Body of pancreas (tissue), 4 donors: ENCODE measurements at regions of chr10 and their contacts with region 1.

Region 1: GRCh38 chr10:96826438-96826837 is 5.7 kb upstream of the LCOR start:
- DNase-seq: no peak
- ATAC-seq: no peak
- H3K4me3 ChIP-seq: no peak overlapping the region
- H3K27ac ChIP-seq: no peak overlapping the region
- H3K4me1 ChIP-seq: peaks cover 9% of the 10 kb centered on the region
- H3K27me3 ChIP-seq: no peaks in the 10 kb centered on the region
- CTCF ChIP-seq: no peak
- POLR2A ChIP-seq: no peak

Region 2: DNA sequence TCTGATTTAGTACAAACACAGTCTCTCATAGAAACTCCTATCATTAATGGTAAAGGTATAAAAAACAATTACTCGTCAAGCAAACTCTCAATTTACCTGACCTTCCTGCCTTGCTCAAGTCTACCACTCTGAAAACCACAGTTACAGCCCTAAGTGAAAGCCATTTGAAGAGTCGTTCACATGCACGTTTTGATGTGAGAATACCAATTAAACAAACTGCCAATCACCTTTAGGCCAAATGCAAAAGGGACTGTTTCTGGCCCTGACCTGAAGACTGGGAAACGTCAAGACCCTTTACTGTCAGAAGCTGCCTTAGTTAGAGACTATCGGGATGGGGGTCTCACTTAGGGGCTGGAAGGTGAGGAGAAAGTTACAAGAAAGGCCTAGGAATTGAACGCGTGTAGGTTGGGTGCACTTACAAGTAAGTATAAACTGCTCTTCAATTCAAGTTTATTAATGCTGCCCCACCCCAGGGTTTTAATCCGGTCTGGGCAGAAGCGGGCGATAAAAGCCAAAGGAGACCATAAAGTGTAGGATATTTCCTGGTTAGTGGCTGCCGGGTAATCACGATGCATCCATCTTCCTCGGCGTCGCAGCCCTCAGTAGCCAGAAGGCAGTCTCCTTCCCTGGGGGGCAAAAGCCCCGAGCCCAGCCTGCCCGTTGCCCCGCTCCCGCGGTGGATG is 240.6 kb before region 1 on chr10:
- intact Hi-C with region 1: no loop called
- DNase-seq: peak in 1 of 4 donors; percentile 35
- ATAC-seq: peak; percentile 12
- H3K4me3 ChIP-seq: peak overlapping the region; percentile 77 to 86
- H3K27ac ChIP-seq: peak overlapping the region; percentile 97 to 99 (median 98)
- H3K4me1 ChIP-seq: peaks cover 55% of the 10 kb centered on the region
- H3K27me3 ChIP-seq: no peaks in the 10 kb centered on the region
- CTCF ChIP-seq: no peak
- POLR2A ChIP-seq: no peak

Region 3: DNA sequence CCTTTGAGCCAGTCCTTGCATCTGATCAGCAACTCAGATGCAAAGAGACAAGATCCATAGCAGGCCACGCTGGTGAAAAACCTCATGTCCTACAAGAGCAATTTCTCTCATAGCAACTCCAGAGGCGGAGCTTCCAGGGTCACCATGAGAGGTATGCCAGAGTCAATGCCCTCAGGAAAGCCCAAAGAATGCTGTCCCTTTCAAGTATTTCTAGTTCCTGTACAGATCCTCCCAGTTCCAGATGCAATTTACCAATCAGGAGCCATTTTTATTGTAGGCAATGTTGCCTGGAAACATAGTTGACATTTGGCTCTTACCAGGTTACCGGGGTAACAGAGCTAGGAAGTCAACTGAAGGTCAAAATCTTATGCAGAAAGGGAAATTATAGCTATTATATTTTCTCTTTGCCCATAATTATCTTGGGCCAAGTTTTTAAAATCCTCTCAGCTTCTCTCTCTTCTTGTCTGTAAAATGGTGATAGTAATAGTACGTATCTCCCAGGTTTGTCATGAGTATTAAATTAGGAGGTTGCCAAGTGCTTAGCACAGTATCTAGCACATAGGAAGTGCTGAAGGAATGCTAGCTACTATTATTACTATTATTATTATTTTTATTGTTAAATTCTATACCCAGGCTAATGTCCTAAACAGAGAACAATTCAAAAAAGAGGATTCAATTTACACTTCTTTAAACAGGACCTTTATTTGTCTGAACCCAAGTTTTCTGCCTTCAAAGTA is 193.3 kb before region 1 on chr10:
- intact Hi-C with region 1: loop called (anchors 10 kb)
- DNase-seq: peak in 2 of 4 donors; percentile 29 to 52
- ATAC-seq: peak; percentile 88
- H3K4me3 ChIP-seq: no peak overlapping the region
- H3K27ac ChIP-seq: peak overlapping the region in 2 of 4 donors; percentile 36 to 59
- H3K4me1 ChIP-seq: peaks cover 23% of the 10 kb centered on the region
- H3K27me3 ChIP-seq: no peaks in the 10 kb centered on the region
- CTCF ChIP-seq: no peak
- POLR2A ChIP-seq: no peak

Region 4: DNA sequence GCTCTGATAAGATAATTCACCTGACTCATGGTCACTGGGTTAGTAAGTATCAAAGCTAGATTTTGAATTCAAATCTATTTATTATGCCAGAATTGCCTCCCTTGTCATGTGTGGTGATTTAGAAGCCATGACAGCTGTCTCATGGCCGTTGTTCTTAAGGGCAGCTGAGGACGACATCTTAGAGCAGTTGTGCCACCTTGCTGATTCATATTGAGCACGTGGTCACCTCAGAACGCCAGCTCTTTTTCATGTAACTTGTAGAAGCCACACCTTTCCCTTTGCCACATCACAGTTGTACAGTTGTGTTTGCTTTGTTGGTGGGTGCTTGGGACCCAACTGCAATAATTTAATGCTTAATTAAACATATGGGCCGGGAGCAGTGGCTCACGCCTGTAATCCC is 101.8 kb before region 1 on chr10:
- intact Hi-C with region 1: no loop called
- DNase-seq: no peak
- ATAC-seq: no peak
- H3K4me3 ChIP-seq: no peak overlapping the region
- H3K27ac ChIP-seq: no peak overlapping the region
- H3K4me1 ChIP-seq: peaks cover 11% of the 10 kb centered on the region
- H3K27me3 ChIP-seq: no peaks in the 10 kb centered on the region
- CTCF ChIP-seq: no peak
- POLR2A ChIP-seq: no peak

Region 5: DNA sequence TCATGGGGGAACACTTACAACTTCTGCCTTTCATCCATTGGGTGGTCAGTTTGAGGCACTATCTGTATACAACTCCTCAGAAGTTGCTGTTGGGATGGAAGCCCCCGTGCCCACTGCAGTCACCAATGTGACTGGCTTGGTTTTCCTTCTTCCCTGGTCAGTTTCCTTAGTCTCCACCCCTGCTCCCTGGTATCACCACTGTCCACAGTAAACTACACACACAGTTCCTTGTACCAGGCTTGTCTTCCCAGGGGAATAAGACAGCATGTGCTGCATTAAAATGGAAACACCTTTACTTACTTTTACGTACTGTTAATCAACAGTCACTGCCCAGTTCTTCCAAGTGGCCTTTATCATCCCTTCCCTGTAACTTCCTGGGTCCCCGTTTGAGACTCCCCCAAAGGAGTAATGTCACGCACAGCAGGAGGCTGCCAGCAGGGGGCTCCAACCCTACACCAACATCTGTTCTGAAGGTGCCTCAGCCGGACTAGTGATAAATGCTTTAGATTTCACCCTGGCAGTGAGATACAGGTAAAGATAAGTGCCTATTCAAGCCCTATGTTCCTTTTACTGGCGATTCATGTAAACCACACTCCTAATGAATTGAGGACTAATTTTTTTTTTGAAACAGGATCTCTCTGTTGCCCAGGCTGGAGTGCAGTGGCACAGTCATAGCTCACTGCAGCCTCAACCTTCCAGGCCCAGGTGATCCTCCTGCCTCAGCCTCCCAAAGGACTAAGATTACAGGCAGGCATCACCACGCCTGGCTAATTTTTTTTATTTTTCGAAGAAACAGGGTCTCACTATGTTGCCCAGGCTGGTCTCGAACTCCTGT is 60.8 kb before region 1 on chr10:
- intact Hi-C with region 1: loop called (anchors 10 kb)
- DNase-seq: peak; percentile 70 to 83 (median 74)
- ATAC-seq: peak; percentile 74
- H3K4me3 ChIP-seq: no peak overlapping the region
- H3K27ac ChIP-seq: no peak overlapping the region
- H3K4me1 ChIP-seq: no peaks in the 10 kb centered on the region
- H3K27me3 ChIP-seq: no peaks in the 10 kb centered on the region
- CTCF ChIP-seq: peak; percentile 56 to 85 (median 78)
- POLR2A ChIP-seq: no peak

Region 6: GRCh38 chr10:97037365-97038361 is 211.2 kb after region 1 on chr10:
- intact Hi-C with region 1: no loop called
- DNase-seq: peak; percentile 83 to 90 (median 84)
- ATAC-seq: peak; percentile 92
- H3K4me3 ChIP-seq: no peak overlapping the region
- H3K27ac ChIP-seq: peak overlapping the region in 3 of 4 donors; percentile 25 to 44 (median 30)
- H3K4me1 ChIP-seq: peaks cover 10% of the 10 kb centered on the region
- H3K27me3 ChIP-seq: no peaks in the 10 kb centered on the region
- CTCF ChIP-seq: peak; percentile 78 to 95 (median 86)
- POLR2A ChIP-seq: no peak

Region 7: GRCh38 chr10:97089209-97089870 is 262.9 kb after region 1 on chr10:
- intact Hi-C with region 1: no loop called
- DNase-seq: no peak
- ATAC-seq: no peak
- H3K4me3 ChIP-seq: no peak overlapping the region
- H3K27ac ChIP-seq: no peak overlapping the region
- H3K4me1 ChIP-seq: no peaks in the 10 kb centered on the region
- H3K27me3 ChIP-seq: no peaks in the 10 kb centered on the region
- CTCF ChIP-seq: no peak
- POLR2A ChIP-seq: no peak